HCT116 (cell line): ENCODE measurements at regions of chr17 and their contacts with region 1.

Region 1: DNA sequence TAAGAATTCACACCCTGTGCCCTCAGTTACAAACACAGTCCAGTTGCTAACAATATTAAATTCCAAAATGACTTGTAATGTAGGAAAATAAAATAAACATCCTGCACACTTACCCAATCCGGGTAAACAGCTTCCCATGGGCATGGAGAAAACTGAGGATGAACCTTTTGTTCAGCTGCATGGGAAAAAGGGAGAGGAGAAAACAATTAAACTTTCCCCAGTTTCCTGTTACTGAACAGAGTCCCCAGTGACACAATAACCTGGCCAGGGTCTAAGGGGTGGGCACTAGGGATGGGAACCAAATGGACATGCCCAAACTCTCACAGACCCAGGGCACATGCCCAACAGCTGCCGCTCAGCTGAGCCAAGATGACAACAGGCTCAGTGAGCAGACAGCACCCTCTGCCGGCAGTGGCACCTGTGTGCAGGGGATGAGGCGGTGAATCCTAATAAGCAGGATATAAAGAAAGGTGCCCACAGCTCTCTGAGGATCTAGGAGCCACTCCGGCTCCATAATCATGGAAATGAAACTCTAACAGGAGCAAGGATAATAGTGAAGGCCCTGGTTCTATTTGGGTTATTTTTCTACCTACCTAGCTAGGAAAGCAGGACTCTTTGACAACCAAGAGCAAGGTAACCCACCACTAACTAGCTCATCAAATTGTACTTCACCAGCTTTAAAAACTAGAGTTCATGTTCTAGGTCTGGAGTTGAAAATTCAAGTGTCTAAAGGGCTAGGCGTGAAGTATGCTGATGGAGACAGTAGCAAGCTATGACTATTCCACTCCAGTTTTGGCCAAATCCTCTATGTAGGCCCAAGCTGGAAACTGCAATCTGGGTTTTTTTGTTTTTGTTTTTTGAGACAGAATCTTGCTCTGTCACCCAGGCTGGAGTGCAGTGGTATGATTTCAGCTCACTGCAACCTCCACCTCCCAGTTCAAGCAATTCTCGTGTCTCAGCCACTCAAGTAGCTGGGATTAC is 58.8 kb downstream of the SMG6 start:
- DNase-seq: peak; percentile 39
- ATAC-seq: peak; percentile 98
- H3K4me3 ChIP-seq: no peak overlapping the region
- H3K27ac ChIP-seq: no peak overlapping the region
- H3K4me1 ChIP-seq: peaks cover 0 to 10% of the 10 kb centered on the region in 2 experiments; a peak in 2 of 4 replicates
- H3K27me3 ChIP-seq: no peaks in the 10 kb centered on the region
- CTCF ChIP-seq: peak; percentile 93 to 99 (median 98)
- POLR2A ChIP-seq: no peak
- RAD21 ChIP-seq: peak; percentile 98

Region 2: DNA sequence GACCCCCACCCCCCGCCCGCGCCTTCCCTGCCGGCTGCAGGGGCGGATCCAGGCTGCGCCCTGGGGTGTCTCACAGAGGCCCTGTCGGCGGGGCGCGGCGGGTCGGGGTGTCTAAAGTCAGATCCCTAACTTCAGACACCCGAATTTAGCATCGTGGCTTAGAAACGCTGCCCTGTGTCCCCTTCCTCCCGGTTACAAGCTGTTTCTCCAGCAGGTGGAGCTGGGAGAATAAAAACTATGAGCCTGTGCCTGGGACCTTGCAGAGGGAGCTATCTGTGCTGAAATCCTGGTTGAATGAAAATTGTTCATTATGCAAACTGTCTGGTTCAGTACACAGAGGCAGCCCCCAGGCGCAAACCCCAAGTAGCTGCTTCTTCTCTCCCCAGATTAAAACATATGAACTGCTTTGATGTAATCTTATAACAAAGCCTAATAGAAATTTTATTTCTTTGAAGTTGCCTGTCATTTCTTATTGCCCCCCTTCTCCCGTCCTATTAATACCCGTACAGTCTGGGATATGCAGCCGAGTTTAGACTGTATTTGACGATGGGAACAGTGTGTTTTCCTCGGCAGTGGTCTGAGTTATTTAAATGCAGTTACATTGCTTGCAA is 336.0 kb before region 1 on chr17:
- CTCF ChIA-PET with region 1: interaction called, 30 read pairs
- POLR2A ChIA-PET with region 1: no interaction called
- RAD21 ChIA-PET with region 1: interaction called, 4 to 5 read pairs
- intact Hi-C with region 1: loop called (anchors 2 kb)
- DNase-seq: peak; percentile 50
- ATAC-seq: peak; percentile 95
- H3K4me3 ChIP-seq: no peak overlapping the region
- H3K27ac ChIP-seq: no peak overlapping the region
- H3K4me1 ChIP-seq: no peaks in the 10 kb centered on the region; a peak in 1 of 4 replicates
- H3K27me3 ChIP-seq: peaks cover 27% of the 10 kb centered on the region
- CTCF ChIP-seq: peak; percentile 73 to 90 (median 73)
- POLR2A ChIP-seq: no peak
- RAD21 ChIP-seq: peak; percentile 92

Region 3: DNA sequence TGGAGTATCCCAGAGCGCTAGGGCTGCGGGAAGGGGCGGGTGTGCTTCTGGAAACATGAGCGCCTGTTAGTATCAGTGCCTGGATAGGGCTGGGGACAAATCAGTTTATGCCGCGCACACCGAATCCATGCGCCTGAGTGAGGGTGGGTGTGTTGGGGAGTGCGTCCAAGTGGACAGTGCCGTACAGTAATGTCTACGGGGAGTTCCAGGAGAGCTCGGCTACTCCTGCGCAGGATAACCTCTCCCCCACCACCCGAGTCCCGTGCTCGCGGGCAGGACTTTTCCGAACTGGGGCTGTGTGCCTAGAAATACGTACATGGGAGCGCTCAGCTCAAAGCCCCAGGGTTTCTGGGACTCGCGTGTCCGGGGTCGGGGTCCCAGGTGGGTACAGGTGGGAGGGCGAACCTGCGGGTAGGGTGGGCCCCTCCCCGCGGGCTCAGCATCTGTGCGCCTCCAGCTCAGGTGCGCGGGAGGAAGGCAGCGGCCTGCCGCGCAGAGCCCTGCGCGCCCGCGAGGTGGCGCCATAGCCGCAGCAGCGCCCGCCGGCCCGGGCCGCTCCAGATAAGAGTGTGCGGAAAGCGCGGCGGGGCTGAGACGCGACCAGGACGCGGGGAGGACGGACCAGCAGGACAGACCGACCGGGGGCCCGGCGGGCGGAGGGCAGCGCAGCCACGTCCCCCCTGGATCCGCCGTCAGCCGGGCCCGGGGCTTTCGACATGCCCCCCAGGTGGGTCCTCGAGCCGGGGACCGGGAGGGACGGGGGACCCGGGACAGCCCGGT is 190.1 kb before region 1 on chr17 and contains the start of gene HIC1:
- CTCF ChIA-PET with region 1: interaction called, 200 read pairs
- POLR2A ChIA-PET with region 1: interaction called, 3 read pairs
- RAD21 ChIA-PET with region 1: interaction called, 20 to 21 read pairs
- intact Hi-C with region 1: loop called (anchors 1 kb)
- DNase-seq: no peak
- ATAC-seq: peak; percentile 62
- H3K4me3 ChIP-seq: no peak within 1 kb of the TSS
- H3K27ac ChIP-seq: no peak within 1 kb of the TSS
- H3K4me1 ChIP-seq: peaks cover 2 to 25% of the 10 kb centered on the region in 2 experiments; a peak in 2 of 4 replicates
- H3K27me3 ChIP-seq: no peaks in the 10 kb centered on the region
- CTCF ChIP-seq: peak; percentile 61 to 84 (median 78)
- POLR2A ChIP-seq: no peak
- RAD21 ChIP-seq: peak; percentile 85
- total RNA-seq, gene HIC1: 0.64 TPM

Region 4: GRCh38 chr17:2064980-2065785 is 179.7 kb before region 1 on chr17:
- CTCF ChIA-PET with region 1: interaction called, 200 read pairs
- POLR2A ChIA-PET with region 1: no interaction called
- RAD21 ChIA-PET with region 1: no interaction called
- intact Hi-C with region 1: no loop called
- DNase-seq: no peak
- ATAC-seq: peak; percentile 93
- H3K4me3 ChIP-seq: no peak overlapping the region
- H3K27ac ChIP-seq: no peak overlapping the region
- H3K4me1 ChIP-seq: peaks cover 0 to 12% of the 10 kb centered on the region in 2 experiments; a peak in 3 of 4 replicates
- H3K27me3 ChIP-seq: no peaks in the 10 kb centered on the region
- CTCF ChIP-seq: peak; percentile 40 to 60 (median 48); a peak in 5 of 6 replicates
- POLR2A ChIP-seq: no peak
- RAD21 ChIP-seq: peak; percentile 50

Region 5: GRCh38 chr17:2192367-2193057 is 52.3 kb before region 1 on chr17:
- CTCF ChIA-PET with region 1: no interaction called
- POLR2A ChIA-PET with region 1: no interaction called
- RAD21 ChIA-PET with region 1: no interaction called
- intact Hi-C with region 1: no loop called
- DNase-seq: peak; percentile 48
- ATAC-seq: peak; percentile 84
- H3K4me3 ChIP-seq: peak overlapping the region in 1 of 2 experiments; percentile 30; a peak in 1 of 4 replicates
- H3K27ac ChIP-seq: peak overlapping the region; percentile 56
- H3K4me1 ChIP-seq: peaks cover 11 to 45% of the 10 kb centered on the region in 2 experiments
- H3K27me3 ChIP-seq: no peaks in the 10 kb centered on the region
- CTCF ChIP-seq: no peak
- POLR2A ChIP-seq: no peak
- RAD21 ChIP-seq: no peak

Region 6: DNA sequence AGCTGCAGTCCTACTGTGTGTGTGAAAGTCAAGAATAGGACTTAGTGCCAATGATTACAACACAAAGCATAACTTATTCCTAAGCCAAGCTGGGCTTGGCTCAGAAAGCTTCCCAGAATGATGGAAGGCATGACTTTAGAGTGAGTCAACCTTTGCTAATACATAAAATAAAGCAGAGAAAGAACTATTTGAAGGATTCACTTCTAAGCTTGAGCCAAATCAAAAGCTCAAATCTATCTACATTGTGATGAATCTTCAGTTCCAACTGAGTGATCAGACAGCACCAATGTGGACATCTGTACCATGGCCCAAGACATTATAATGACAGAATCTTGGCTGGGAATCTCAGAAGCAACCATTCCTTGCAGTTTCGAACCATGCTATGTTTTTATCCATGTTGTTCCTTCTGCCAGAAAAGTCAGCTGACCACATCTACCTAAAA is 17.3 kb after region 1 on chr17:
- CTCF ChIA-PET with region 1: interaction called, 14 read pairs
- POLR2A ChIA-PET with region 1: no interaction called
- RAD21 ChIA-PET with region 1: no interaction called
- intact Hi-C with region 1: no loop called
- DNase-seq: no peak
- ATAC-seq: no peak
- H3K4me3 ChIP-seq: no peak overlapping the region
- H3K27ac ChIP-seq: no peak overlapping the region
- H3K4me1 ChIP-seq: peaks cover 0 to 5% of the 10 kb centered on the region in 2 experiments; a peak in 1 of 4 replicates
- H3K27me3 ChIP-seq: no peaks in the 10 kb centered on the region
- CTCF ChIP-seq: no peak
- POLR2A ChIP-seq: no peak
- RAD21 ChIP-seq: no peak